Activated CD4-positive, alpha-beta memory T cell treated with anti-CD3 and anti-CD28 coated beads for 36 hours (primary cell): ENCODE measurements at regions of chr17 and their contacts with region 1.

Region 1: GRCh38 chr17:19377602-19378392 is 501 bp upstream of the MAPK7 start:
- DNase-seq: peak; percentile 98
- H3K4me3 Mint-ChIP-seq: peak overlapping the region; percentile 97
- H3K27ac Mint-ChIP-seq: peak overlapping the region; percentile 99
- H3K4me1 Mint-ChIP-seq: peaks cover 16% of the 10 kb centered on the region
- H3K27me3 Mint-ChIP-seq: no peaks in the 10 kb centered on the region

Region 2: DNA sequence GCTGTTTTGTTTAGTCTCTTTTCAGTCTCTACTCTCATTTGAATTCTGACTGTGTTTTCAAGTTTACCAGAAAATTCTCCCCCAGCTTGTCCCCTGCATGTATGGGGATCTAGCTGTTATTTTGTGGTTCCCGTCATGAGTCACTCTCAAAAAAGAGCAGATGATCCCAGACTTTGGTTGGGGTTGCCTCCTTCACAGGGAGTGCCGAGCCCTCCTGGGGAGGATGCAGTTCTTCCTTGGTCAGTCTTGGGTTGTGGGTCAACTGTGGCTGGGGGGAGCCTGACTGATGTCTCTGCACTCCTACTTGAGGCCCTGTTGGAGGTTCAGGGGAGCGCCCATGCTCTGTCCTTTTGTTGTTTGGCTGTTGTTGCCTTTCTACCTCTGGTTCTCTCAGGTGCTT is 102.9 kb before region 1 on chr17:
- CTCF ChIA-PET with region 1: no interaction called
- POLR2A ChIA-PET with region 1: no interaction called
- intact Hi-C with region 1: no loop called
- DNase-seq: no peak
- H3K4me3 Mint-ChIP-seq: no peak overlapping the region
- H3K27ac Mint-ChIP-seq: no peak overlapping the region
- H3K4me1 Mint-ChIP-seq: peaks cover 14% of the 10 kb centered on the region
- H3K27me3 Mint-ChIP-seq: peaks cover 5% of the 10 kb centered on the region

Region 3: GRCh38 chr17:19398301-19399181 is 20.7 kb after region 1 on chr17:
- CTCF ChIA-PET with region 1: no interaction called
- POLR2A ChIA-PET with region 1: no interaction called
- intact Hi-C with region 1: no loop called
- DNase-seq: no peak
- H3K4me3 Mint-ChIP-seq: no peak overlapping the region
- H3K27ac Mint-ChIP-seq: no peak overlapping the region
- H3K4me1 Mint-ChIP-seq: no peaks in the 10 kb centered on the region
- H3K27me3 Mint-ChIP-seq: peaks cover 3% of the 10 kb centered on the region

Region 4: DNA sequence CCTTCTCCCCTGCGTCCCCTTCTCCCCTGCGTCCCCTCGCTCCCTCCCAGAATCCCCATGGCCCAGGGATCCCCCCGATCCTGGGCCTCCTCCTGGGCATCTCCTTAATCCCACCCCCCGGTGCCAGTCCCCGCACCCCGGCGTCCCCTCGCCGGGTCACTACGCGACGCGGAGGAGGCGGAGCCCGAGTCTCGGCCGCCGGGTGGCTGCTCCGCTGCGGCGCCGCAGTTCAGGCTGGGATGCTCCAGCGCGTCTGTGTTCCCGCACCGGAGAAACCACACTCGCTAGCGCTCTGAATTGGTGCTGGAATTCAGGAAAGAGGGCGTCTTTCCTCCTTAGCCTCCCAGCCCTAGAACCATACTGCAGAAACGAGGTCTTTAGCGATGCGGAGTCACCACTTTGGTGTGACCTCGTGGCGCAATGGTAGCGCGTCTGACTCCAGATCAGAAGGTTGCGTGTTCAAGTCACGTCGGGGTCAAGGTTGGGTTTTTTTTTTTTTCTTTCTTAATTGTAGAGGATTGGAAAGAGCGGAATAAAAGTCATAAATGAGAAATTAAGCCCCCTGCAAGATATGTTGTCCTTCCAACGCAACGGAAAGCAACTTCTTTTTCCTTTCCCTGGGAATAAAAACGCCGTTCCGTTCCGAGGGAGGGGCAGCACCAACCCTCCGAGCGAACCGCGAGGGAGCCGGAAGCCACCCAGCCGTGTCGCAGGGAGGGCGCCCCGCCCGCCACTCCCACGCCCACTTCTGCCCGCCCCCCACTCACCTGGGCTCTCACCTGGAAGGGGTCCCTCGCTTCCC is 130.2 kb after region 1 on chr17:
- CTCF ChIA-PET with region 1: no interaction called
- POLR2A ChIA-PET with region 1: no interaction called
- intact Hi-C with region 1: loop called (anchors 5 kb)
- DNase-seq: peak; percentile 90
- H3K4me3 Mint-ChIP-seq: peak overlapping the region; percentile 84
- H3K27ac Mint-ChIP-seq: peak overlapping the region; percentile 90
- H3K4me1 Mint-ChIP-seq: peaks cover 8% of the 10 kb centered on the region
- H3K27me3 Mint-ChIP-seq: peaks cover 3% of the 10 kb centered on the region